Heart left ventricle (tissue), 16 donors: ENCODE measurements at regions of chr11 and their contacts with region 1.

Region 1: DNA sequence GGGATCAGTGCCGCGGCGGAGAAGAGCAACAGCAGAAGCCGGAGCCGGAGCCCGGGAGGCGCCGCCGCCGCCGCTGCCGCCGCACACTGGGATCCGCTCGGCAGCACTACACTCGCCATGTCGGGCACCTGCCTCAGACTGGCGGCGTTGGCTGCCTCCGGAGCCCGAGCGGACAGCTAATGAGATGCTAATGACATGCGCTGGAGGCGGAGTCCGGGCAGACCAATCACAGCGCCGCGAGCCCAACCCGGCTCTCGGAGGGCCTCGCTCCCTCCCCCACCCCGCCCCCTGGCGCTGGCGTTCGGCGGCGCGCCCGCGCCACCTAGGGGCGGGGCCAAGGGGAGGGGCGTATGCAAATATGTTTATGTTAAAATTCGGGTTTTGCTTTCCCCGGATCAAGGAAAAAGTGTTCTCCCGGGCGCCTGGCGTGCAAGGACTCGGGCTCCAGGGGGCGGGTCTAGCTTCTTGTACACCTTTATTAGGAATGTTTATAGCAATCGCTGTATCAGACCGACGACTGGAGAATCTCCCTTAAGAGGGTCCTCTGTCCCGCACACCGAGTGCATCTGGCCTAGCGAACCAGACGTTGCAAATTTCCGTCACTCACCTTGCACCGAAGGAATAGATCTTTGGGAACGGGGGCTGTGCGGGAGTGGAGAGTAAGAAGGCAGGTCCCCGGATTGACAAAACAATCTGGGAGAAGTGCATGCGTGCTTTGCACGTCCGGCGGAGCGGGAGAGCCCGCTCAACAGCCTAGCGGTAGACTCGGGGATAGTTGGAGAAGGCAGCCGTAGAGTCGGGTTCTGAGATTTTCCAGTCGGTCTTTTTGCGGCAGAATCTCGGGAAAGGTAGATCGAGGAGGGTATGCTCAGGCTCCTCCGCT is at the start of gene CADM1:
- DNase-seq: peak; percentile 93 to 97 (median 94)
- ATAC-seq: peak; percentile 93 to 96 (median 94)
- H3K4me3 ChIP-seq: peak within 1 kb of the TSS; percentile 51 to 84 (median 72)
- H3K27ac ChIP-seq: peak within 1 kb of the TSS in 11 of 12 donors; percentile 74 to 90 (median 84)
- H3K4me1 ChIP-seq: peaks cover 0 to 36% (median 13%) of the 10 kb centered on the region in 12 donors
- H3K27me3 ChIP-seq: peaks cover 0 to 85% (median 12%) of the 10 kb centered on the region in 9 donors
- CTCF ChIP-seq: peak; percentile 45 to 85 (median 70)
- POLR2A ChIP-seq: peak; percentile 80 to 97
- total RNA-seq, gene CADM1: 21.0 to 80.2 (median 45.8) TPM

Region 2: DNA sequence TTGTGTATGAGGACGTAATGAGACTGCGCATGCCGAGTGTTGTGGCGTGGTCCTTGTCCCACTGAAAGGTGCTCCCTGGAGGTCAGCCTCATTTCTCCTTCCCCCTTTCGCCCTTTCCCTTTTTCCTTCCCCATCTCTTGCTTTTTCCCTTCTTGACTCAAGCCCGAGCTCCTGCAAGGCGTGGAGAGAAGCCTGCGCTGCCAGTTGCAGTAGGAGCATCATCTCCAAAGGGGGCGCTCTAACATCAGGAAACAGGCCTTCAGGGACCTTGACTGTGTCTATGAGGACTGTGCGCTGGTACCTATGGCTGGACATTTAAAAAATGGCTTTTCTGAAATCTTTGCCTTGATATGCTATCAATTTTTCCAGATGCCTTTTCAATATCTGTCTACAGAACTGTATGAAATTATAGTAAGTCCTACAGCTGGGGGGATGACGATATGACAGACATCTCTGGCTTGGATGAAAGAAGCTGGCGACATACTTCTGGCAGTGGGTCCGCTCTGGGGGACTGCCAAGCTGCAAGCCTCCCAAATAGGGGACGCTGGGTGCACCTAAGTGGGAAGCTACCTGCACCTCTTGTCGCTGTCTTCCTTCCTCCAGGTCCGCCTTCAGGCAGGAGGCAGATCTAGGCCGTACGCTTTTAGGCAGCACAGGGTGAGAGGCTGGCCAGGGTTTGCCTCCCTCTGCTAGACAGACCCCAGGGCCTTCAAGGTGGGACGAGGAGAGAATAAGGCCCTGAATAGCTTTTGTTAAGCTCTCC is 729.7 kb before region 1 on chr11:
- intact Hi-C with region 1: loop called in 2 of 10 experiments (anchors 5 to 10 kb)
- DNase-seq: peak in 4 of 5 donors; percentile 21 to 35 (median 26)
- ATAC-seq: peak; percentile 71 to 86 (median 80)
- H3K4me3 ChIP-seq: no peak overlapping the region
- H3K27ac ChIP-seq: peak overlapping the region in 1 of 12 donors; percentile 39
- H3K4me1 ChIP-seq: peaks cover 0 to 15% (median 8%) of the 10 kb centered on the region in 12 donors
- H3K27me3 ChIP-seq: no peaks in the 10 kb centered on the region
- CTCF ChIP-seq: peak; percentile 40 to 74 (median 58)
- POLR2A ChIP-seq: no peak

Region 3: GRCh38 chr11:115334932-115335788 is 169.4 kb before region 1 on chr11:
- intact Hi-C with region 1: loop called in 8 of 10 experiments (anchors 2 to 10 kb)
- DNase-seq: no peak
- ATAC-seq: no peak
- H3K4me3 ChIP-seq: no peak overlapping the region
- H3K27ac ChIP-seq: no peak overlapping the region
- H3K4me1 ChIP-seq: peaks cover 0 to 8% (median 0%) of the 10 kb centered on the region in 12 donors
- H3K27me3 ChIP-seq: no peaks in the 10 kb centered on the region
- CTCF ChIP-seq: peak; percentile 50 to 85 (median 73)
- POLR2A ChIP-seq: no peak

Region 4: DNA sequence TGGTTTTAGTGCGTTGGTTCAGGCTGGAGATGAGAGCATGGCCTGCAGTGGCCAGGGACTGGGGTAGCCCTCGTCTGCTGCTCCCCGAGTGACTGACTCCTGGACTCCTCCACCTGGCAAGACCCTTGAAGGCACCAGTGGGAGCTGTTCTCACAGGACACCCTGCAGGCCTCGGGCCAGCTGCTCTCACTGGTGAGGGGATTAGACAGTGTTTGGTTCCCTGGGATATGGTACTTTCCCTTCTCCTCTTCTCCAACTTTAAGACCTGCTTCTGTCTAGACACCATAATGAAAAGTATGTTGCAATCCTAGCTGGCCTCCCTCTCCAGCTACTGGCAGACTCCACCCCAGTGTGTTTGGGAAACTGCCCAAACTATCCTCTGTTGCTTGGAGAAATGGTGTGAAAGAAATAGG is 168.5 kb after region 1 on chr11:
- intact Hi-C with region 1: loop called in 5 of 10 experiments (anchors 5 to 10 kb)
- DNase-seq: peak in 4 of 5 donors; percentile 27 to 58 (median 48)
- ATAC-seq: peak; percentile 54 to 94 (median 81)
- H3K4me3 ChIP-seq: no peak overlapping the region
- H3K27ac ChIP-seq: peak overlapping the region in 2 of 12 donors; percentile 23 to 41
- H3K4me1 ChIP-seq: peaks cover 0 to 15% (median 8%) of the 10 kb centered on the region in 12 donors
- H3K27me3 ChIP-seq: no peaks in the 10 kb centered on the region
- CTCF ChIP-seq: no peak
- POLR2A ChIP-seq: no peak

Region 5: DNA sequence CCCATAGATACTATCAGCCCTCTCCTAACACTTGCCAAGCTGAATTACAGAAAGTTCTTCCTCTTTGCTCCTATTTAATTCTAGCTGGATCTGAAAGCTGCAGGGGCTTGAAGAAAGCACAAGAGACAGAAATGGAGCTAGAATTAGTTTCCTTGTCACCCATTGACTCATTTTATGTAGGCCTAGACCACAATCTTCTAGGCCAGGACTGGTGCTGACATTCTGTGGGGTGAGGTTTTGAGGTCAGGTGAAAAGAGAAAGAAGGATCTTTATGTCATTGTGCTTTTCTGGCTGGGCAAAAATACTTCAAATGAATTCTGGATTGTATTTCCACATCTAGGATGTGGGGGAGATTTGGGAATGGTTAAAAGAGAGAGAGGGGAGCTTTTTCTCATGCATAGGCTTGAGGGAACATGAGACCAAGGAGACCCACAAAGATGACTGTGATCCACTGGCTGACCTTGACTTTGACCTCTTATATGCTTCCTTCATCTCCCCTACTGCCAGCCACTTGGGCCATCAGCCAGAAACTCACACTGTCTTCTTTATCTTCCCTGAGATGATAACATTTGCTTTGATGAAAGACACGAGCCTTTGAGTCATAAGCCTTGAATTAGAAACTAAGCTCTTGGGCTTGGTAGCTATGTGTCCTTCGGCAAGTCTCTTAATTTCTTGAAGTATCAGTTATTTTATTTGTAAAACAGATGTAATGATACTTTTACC is 274.6 kb after region 1 on chr11:
- intact Hi-C with region 1: loop called in 1 of 10 experiments (anchors 10 kb)
- DNase-seq: peak in 1 of 5 donors; percentile 50
- ATAC-seq: no peak
- H3K4me3 ChIP-seq: no peak overlapping the region
- H3K27ac ChIP-seq: no peak overlapping the region
- H3K4me1 ChIP-seq: peaks cover 0 to 24% (median under 1%) of the 10 kb centered on the region in 12 donors
- H3K27me3 ChIP-seq: no peaks in the 10 kb centered on the region
- CTCF ChIP-seq: no peak
- POLR2A ChIP-seq: no peak

Region 6: DNA sequence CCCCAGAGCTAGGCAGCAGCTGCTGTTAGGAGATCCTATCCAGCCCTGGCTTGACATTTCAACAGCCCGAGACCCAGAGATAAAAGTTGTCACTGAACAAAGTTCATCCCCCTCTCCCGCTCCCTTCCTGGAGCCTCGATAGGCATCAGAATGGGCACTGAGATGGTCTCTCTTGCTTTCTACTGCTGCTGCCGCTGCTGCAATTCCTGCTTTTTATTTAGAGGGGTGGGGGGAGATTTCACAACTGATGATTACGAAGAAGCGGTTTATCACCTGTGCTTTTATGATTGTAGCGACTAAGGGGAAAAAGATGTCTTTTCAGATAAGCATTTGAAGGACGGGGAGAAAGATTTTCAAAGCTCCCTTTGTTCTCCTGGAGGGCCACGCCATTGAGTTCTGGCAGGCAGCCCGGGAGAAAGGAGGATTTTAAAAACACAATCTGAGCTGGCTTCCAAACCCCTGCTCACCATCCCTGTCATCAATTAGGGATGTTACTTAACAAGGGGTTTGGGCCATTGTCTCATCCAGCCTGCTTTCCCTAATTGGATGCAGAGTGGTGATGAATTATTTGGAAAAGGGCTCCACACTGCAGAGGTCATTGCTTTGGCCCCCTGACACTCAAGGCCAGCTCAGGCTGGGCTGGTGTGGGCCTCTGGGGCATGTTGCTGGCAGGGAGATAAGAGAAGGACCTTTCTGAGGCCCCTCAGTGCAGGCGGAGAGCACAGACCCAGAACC is 923.6 kb after region 1 on chr11:
- intact Hi-C with region 1: no loop called
- DNase-seq: no peak
- ATAC-seq: peak in 3 of 4 donors; percentile 43 to 64 (median 44)
- H3K4me3 ChIP-seq: no peak overlapping the region
- H3K27ac ChIP-seq: peak overlapping the region in 2 of 12 donors; percentile 29 to 30
- H3K4me1 ChIP-seq: peaks cover 0 to 17% (median 5%) of the 10 kb centered on the region in 12 donors
- H3K27me3 ChIP-seq: no peaks in the 10 kb centered on the region
- CTCF ChIP-seq: no peak
- POLR2A ChIP-seq: no peak